ENCODE measurements at regions of chr6 and their contacts with region 1.

Region 1: DNA sequence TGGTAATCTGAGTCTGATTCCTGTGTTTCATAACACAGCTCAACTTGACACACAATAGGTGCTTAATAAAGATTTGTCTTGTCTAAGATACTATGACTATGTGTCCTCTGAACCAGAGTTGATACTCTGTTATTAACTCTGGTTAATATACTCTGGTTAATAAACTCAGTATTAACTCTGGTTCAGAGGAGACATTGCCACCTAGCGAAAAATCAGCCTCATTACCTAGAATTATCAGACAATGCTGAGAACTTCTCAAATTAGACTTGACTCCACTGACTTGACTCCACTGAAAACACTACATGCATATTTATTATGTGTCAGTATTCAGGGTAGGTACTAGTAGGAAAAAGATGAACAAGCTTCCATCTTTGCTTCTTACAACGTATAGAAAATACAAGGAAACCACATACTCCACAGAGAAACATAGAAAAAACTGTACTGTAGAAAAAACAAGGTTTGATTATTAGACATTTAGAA is 73.9 kb downstream of the AHI1 start:
- DNase-seq: no peak
- ATAC-seq: peak; percentile 61

Region 2: DNA sequence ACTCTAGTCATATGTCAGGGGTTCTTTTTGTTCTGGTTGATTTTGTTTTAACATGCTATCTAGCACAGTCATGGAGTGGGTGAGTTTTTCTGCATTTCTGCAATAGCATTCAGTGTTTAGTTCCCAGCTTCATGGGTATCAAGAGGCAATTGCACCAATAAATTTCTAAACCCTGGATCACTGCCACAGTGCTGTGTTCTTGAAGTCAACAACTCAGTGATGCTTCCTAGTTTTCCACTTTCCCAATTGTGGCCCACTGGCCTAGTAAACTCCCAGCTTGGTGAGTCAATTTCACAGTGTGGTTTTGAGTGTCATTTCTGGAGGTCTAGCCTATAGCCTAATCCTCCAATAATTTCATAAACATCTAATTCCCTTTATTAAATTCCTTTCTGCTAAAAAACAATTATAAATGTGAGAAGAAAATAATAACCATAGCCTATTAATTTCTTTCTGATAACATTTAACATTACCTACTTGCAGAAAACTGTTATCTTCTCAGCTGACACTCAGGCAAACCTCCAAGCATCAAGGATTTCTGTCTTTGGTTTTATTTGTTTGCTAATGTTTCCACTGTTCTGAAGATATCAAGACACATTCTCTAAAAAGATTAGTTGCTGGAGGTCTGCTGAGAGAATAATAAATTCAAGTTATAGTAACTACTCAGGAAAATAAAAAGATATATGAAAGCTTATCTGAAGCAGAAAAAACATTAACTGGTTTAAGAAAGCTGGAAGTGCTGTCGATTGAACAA is 517.8 kb after region 1 on chr6:
- intact Hi-C with region 1: loop called (anchors 10 kb)
- DNase-seq: no peak
- ATAC-seq: no peak